ENCODE measurements at regions of chr12 and their contacts with region 1.

Region 1: DNA sequence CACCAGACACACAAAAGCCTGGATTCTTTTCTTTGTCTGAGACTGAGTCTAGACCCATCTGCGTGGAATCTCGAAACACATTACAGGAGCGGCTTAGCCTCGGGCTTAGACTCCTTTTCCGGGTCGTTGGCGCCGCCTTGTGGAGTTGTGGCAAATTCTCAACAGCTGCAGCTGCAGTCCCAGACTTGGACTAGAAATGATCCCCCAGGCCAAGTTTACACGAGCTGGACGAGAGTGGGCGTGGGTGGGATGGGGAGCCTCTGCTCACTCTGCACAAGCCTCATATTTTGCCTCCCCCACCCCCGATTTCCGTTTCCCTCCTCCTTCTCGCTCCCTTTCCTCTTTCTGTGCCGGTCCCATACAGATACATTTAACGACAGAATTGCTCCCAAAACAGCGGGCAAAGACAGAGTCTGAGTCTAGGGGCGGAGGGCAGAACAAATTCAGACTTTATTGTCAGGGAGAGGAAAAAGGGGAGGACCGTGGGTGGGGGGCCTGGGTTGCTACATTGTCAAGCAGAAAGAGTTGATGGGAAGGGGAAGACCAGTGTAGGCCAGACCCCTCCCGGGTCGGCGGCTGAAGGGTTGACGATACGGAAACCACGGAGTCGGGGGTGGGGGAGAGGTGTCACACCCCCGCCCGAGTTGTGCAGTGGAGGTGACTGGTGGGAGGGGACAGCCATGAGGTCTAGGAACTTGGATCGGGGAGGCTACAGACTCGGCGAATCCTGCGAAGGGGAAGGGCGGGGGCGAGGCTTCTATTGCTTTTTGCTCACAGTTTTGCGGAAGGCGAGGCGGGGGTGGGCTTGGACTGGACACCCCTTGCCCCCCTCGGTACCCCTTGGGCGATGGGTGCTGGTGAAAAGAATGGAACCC is 4.7 kb upstream of the GPR84 start:
- DNase-seq: peak; percentile 93
- ATAC-seq: peak; percentile 92
- H3K4me3 Mint-ChIP-seq: no peak overlapping the region
- H3K27ac Mint-ChIP-seq: no peak overlapping the region
- H3K4me1 Mint-ChIP-seq: peaks cover 28% of the 10 kb centered on the region
- H3K27me3 Mint-ChIP-seq: peaks cover 18% of the 10 kb centered on the region

Region 2: GRCh38 chr12:54214553-54215406 is 154.2 kb before region 1 on chr12:
- CTCF ChIA-PET with region 1: interaction called, 11 read pairs
- DNase-seq: peak; percentile 95
- ATAC-seq: peak; percentile 90
- H3K4me3 Mint-ChIP-seq: peak overlapping the region; percentile 61
- H3K27ac Mint-ChIP-seq: peak overlapping the region; percentile 18
- H3K4me1 Mint-ChIP-seq: peaks cover 36% of the 10 kb centered on the region
- H3K27me3 Mint-ChIP-seq: peaks cover 7% of the 10 kb centered on the region

Region 3: GRCh38 chr12:54251667-54252284 is 117.2 kb before region 1 on chr12:
- CTCF ChIA-PET with region 1: interaction called, 14 read pairs
- DNase-seq: no peak
- ATAC-seq: peak; percentile 45
- H3K4me3 Mint-ChIP-seq: no peak overlapping the region
- H3K27ac Mint-ChIP-seq: peak overlapping the region; percentile 19
- H3K4me1 Mint-ChIP-seq: peaks cover 4% of the 10 kb centered on the region
- H3K27me3 Mint-ChIP-seq: no peaks in the 10 kb centered on the region

Region 4: GRCh38 chr12:54279866-54280467 is 89.0 kb before region 1 on chr12 and contains the start of gene CBX5:
- CTCF ChIA-PET with region 1: interaction called, 16 read pairs
- DNase-seq: peak; percentile 100
- ATAC-seq: peak; percentile 59
- H3K4me3 Mint-ChIP-seq: no peak within 1 kb of the TSS
- H3K27ac Mint-ChIP-seq: no peak within 1 kb of the TSS
- H3K4me1 Mint-ChIP-seq: peaks cover 55% of the 10 kb centered on the region
- H3K27me3 Mint-ChIP-seq: no peaks in the 10 kb centered on the region
- total RNA-seq, gene CBX5: 102 to 113 TPM

Region 5: GRCh38 chr12:54294152-54294952 is 74.6 kb before region 1 on chr12:
- CTCF ChIA-PET with region 1: interaction called, 80 read pairs
- DNase-seq: peak; percentile 79
- ATAC-seq: peak; percentile 66
- H3K4me3 Mint-ChIP-seq: no peak overlapping the region
- H3K27ac Mint-ChIP-seq: no peak overlapping the region
- H3K4me1 Mint-ChIP-seq: peaks cover 2% of the 10 kb centered on the region
- H3K27me3 Mint-ChIP-seq: peaks cover 24% of the 10 kb centered on the region

Region 6: DNA sequence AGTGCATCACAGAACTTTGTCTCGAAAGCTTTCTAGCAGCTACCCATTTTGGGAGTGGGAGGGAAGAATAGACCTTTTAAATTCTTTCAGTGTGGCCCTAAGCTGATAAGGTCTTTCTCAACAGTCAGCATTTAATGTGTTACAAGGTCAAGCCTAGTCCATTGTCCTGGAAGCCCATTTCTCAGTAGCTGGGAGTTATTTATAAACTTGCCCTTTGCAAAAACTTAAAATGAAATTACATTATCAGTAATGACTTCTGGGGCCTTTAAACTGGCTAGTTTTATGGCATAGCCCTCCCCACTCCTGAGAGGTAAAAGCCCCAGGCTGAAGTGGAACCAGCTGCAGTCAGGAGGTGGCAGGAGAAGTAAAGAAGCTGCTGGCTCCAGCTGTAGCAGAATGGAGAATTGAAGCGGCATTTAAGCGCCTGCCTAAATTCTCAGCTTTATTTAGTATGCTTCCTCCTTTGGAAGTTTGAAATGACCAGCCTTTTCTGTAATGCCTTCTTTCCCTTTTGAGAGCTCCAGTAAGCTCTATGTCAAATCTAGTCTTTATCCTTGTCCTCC is 31.6 kb before region 1 on chr12:
- CTCF ChIA-PET with region 1: interaction called, 44 read pairs
- DNase-seq: no peak
- ATAC-seq: no peak
- H3K4me3 Mint-ChIP-seq: no peak overlapping the region
- H3K27ac Mint-ChIP-seq: no peak overlapping the region
- H3K4me1 Mint-ChIP-seq: peaks cover 3% of the 10 kb centered on the region
- H3K27me3 Mint-ChIP-seq: no peaks in the 10 kb centered on the region

Region 7: DNA sequence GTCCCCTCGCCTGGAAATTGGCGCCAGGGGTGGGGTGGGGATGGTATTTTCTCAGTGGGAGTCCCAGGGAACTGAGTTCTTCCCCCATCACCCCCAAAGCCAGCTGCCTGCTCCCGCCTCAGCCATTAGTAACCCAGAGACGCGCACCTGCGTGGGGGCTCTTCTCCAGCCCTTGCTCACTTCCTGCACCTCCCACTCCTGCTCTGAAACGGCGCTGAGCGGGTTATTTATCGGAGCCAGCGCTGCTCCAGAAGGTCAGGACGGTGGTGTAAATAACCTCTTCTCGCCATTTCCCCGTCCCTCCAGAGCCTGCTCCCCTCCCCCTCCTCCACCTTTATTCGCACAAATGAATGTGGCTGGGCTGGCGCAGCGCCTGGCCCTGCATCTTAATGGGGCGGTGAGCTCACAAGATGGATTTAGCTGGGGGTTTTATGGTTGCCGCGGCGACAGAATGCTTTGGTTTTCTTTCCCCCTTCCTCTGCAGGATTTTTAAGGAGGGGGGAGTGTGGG is 16.9 kb before region 1 on chr12:
- CTCF ChIA-PET with region 1: interaction called, 11 read pairs
- DNase-seq: no peak
- ATAC-seq: no peak
- H3K4me3 Mint-ChIP-seq: no peak overlapping the region
- H3K27ac Mint-ChIP-seq: no peak overlapping the region
- H3K4me1 Mint-ChIP-seq: peaks cover 8% of the 10 kb centered on the region
- H3K27me3 Mint-ChIP-seq: no peaks in the 10 kb centered on the region